ENCODE measurements at regions of chr19 and their contacts with region 1.

Region 1: DNA sequence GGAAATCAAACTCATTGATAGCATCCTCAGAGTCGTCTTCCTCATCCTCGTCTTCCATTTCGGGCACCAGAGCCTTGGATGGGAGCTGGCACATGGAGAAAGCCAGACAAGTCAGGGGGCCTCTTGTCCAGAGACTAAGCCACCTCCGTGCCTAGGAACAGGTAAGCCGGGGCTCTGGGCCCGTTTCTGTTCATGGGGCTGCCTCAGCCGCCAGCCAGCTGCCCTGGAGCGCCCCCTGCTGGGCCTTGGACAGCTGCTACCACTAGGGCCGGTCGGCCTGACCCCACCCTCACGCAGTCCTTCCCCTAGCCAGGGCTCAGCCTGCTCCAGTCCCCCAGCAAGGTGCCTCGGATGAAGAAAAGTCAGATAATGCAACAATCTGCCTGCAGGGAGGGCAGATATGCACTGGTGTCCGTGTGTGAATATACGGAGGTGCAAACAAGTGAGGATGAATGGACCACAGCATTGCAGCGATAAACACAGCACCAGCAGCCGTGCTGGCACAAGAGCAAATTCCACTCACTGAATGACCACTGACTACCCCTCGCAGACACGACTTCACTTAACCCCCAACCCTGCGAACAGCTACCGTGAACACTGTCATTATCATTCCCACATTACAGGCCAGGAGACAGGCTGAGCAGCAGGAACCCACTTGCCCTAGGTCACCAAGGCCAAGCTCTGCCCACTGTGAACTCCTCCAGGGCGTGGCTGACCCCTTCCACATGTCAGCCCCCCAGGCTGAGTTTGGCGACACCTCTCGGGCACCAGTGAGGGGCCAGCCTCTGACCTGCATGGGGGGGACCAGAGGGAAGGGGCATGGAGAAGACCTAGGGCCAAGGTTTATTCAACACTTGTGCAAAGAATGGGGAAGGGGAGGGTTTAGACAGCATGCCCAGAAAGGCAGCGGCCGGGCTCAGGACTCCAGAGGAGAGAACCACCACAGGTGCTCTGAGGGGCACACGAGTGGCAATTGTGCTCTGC is 12.1 kb upstream of the PRKD2 start:
- DNase-seq: peak; percentile 64 to 93 (median 83)
- ATAC-seq: peak; percentile 94 to 95
- H3K4me3 Mint-ChIP-seq: peak overlapping the region in 8 of 10 donors; percentile 24 to 75 (median 47)
- H3K27ac Mint-ChIP-seq: peak overlapping the region in 7 of 10 donors; percentile 14 to 92 (median 26)
- H3K4me1 Mint-ChIP-seq: peaks cover 14 to 27% (median 22%) of the 10 kb centered on the region in 4 donors
- H3K27me3 Mint-ChIP-seq: no peaks in the 10 kb centered on the region

Region 2: GRCh38 chr19:46704379-46705076 is 24.5 kb before region 1 on chr19:
- POLR2A ChIA-PET with region 1: interaction called, 48 read pairs
- DNase-seq: peak; percentile 69 to 93 (median 86)
- ATAC-seq: peak; percentile 96 to 97
- H3K4me3 Mint-ChIP-seq: peak overlapping the region in 2 of 10 donors; percentile 2 to 8
- H3K27ac Mint-ChIP-seq: peak overlapping the region; percentile 37 to 94 (median 80)
- H3K4me1 Mint-ChIP-seq: peaks cover 7 to 23% (median 16%) of the 10 kb centered on the region in 4 donors
- H3K27me3 Mint-ChIP-seq: no peaks in the 10 kb centered on the region

Region 3: GRCh38 chr19:46710687-46711086 is 18.3 kb before region 1 on chr19:
- POLR2A ChIA-PET with region 1: interaction called, 52 read pairs
- DNase-seq: no peak
- ATAC-seq: no peak
- H3K4me3 Mint-ChIP-seq: no peak overlapping the region
- H3K27ac Mint-ChIP-seq: peak overlapping the region in 7 of 10 donors; percentile 29 to 77 (median 62)
- H3K4me1 Mint-ChIP-seq: peaks cover 5 to 34% (median 28%) of the 10 kb centered on the region in 4 donors
- H3K27me3 Mint-ChIP-seq: no peaks in the 10 kb centered on the region

Region 4: DNA sequence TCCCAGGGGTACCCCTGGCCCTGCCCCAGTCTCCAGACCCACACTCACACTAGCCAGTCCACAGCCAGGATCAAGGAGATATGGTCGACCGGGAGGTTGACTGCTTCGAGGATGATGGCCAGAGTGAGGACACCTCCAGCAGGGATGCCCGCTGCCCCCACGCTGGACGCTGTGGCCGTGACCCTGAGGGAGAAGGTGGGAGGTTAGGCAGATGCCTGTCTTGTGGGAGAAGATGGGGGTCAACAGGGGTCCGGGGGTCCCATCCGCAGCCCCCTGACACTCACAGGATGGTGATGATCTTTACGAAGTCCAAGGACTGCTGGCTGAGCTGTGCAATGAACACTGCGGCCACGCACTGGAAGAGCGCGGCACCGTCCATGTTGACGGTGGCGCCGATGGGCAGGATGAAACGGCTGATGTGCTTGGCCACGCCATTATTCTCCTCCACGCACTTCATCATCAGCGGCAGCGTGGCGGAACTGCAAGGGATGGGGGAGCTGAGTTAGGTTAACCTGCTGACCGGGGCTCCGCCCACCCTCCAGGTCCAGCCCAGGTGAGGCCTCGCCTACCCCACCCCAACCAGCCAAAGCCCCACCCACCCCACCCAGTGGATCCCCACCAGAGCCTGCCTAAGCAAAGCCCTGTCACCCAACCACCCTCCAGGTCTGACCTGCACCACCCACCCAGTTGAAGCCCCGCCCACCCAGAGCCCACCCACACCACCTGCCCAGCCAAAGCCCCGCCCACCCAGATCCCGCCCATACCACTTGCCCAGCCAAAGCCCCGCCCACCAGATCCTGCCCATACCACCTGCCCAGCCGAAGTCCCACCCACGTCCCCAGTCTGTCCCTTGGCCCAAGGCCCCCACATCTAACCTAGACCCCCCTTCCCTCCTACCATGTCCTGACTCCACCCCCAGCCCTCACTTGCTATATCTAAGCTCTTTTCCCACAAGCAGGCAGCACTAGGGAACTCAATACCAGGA is 48.2 kb after region 1 on chr19:
- POLR2A ChIA-PET with region 1: no interaction called
- DNase-seq: no peak
- ATAC-seq: no peak
- H3K4me3 Mint-ChIP-seq: no peak overlapping the region
- H3K27ac Mint-ChIP-seq: peak overlapping the region in 3 of 10 donors; percentile 56 to 73 (median 62)
- H3K4me1 Mint-ChIP-seq: peaks cover 0 to 10% (median 5%) of the 10 kb centered on the region in 4 donors
- H3K27me3 Mint-ChIP-seq: no peaks in the 10 kb centered on the region

Measured in naive thymus-derived CD8-positive, alpha-beta T cell (primary cell).